ENCODE measurements at regions of chr10 and their contacts with region 1.

Region 1: DNA sequence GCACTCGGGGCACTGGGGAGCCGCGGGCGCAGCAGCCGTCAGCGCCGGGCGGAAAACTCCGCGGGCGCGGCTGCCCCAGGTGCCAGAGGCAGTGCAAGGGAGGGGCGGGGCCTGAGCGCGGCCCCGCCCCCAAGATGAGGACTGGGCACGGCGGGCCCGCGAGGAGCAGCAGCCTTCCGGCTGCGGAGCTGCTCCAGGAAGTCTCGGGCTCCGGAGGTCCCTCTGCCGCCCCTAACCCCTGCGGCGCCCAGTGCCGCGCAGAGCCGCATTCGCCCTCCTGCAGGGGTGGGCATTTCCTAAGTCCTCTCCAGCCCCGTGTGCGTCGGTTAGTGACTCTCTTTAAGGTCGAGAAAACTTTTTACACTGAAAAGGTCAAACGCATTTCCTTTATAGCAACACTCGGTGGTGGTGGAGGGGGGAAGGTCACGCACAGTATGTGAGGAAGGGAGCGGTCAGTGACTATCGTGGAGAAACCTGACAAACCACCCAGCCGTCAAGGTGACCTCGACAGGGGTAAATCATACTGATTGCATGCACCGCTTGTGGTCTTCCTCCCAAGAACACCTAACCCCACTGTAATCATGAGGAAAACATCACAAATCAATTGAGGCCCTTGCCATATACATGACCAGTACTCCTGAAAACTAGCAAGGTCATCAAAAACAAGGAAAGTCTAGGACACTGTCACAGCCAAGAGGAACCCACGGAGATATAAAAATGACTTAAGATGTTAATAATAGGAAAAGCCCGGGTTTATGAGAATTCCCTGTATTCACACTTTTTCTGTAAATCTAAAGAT is at the start of gene ANXA11:
- DNase-seq: peak; percentile 76
- H3K4me3 Mint-ChIP-seq: peak within 1 kb of the TSS; percentile 94
- H3K27ac Mint-ChIP-seq: peak within 1 kb of the TSS; percentile 92
- H3K4me1 Mint-ChIP-seq: peaks cover 50% of the 10 kb centered on the region
- H3K27me3 Mint-ChIP-seq: peaks cover 5% of the 10 kb centered on the region
- total RNA-seq, gene ANXA11: 216 and 239 TPM in 2 replicates

Region 2: DNA sequence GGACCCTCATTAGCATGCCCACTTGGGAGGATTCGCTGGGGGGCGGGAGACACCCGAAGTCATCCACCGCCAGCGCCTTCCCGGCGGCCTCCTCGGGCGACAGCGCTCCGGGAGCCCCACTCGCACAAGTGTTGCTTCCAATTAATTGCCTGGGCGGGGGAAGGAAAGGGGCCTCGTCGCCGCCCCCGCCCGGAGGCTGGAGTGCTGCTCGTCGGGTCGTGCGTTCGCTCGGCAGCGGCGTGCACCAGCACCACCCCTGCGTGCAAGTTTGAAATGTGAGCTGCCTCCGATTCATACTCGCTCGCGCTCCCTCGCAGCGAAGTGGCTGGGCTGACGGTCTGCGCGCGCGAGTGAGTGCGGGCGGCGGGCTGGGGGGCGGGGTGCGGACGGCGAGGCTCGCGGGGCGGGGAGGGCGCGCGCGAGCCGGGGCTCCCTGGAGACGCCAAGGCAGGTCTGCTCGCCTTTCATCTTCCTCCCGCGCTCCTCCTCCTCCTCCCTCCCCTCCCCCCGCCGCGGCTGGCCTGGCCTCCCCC is 963.0 kb before region 1 on chr10:
- intact Hi-C with region 1: loop called (anchors 10 kb)
- DNase-seq: peak; percentile 65
- H3K4me3 Mint-ChIP-seq: peak overlapping the region; percentile 81
- H3K27ac Mint-ChIP-seq: peak overlapping the region; percentile 83
- H3K4me1 Mint-ChIP-seq: peaks cover 71% of the 10 kb centered on the region
- H3K27me3 Mint-ChIP-seq: no peaks in the 10 kb centered on the region

Region 3: DNA sequence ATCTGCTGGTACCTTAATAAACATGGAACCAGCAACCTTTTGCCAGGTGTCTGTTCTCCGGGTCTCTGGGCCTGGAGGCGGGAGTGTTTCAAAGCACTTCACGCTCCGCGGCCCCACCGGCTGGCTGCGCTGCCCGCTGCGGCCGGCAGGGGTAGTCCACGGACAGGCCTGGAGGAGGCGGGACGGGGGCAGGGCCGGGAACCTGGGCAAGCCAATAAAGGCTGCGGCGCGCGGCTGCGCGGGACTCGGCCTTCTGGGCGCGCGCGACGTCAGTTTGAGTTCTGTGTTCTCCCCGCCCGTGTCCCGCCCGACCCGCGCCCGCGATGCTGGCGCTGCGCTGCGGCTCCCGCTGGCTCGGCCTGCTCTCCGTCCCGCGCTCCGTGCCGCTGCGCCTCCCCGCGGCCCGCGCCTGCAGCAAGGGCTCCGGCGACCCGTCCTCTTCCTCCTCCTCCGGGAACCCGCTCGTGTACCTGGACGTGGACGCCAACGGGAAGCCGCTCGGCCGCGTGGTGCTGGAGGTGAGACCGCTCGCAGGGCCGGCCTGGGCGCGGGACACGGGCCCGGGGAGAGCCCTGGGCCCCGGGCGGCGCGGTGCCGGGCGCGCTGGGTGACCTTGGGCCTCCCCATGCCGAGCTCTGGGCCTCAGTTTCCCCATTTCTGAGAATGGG is 858.3 kb before region 1 on chr10 and contains the start of gene PPIF:
- intact Hi-C with region 1: loop called (anchors 1 kb)
- DNase-seq: peak; percentile 95
- H3K4me3 Mint-ChIP-seq: peak within 1 kb of the TSS; percentile 95
- H3K27ac Mint-ChIP-seq: peak within 1 kb of the TSS; percentile 93
- H3K4me1 Mint-ChIP-seq: peaks cover 69% of the 10 kb centered on the region
- H3K27me3 Mint-ChIP-seq: no peaks in the 10 kb centered on the region
- total RNA-seq, gene PPIF: 155 and 157 TPM in 2 replicates

Region 4: DNA sequence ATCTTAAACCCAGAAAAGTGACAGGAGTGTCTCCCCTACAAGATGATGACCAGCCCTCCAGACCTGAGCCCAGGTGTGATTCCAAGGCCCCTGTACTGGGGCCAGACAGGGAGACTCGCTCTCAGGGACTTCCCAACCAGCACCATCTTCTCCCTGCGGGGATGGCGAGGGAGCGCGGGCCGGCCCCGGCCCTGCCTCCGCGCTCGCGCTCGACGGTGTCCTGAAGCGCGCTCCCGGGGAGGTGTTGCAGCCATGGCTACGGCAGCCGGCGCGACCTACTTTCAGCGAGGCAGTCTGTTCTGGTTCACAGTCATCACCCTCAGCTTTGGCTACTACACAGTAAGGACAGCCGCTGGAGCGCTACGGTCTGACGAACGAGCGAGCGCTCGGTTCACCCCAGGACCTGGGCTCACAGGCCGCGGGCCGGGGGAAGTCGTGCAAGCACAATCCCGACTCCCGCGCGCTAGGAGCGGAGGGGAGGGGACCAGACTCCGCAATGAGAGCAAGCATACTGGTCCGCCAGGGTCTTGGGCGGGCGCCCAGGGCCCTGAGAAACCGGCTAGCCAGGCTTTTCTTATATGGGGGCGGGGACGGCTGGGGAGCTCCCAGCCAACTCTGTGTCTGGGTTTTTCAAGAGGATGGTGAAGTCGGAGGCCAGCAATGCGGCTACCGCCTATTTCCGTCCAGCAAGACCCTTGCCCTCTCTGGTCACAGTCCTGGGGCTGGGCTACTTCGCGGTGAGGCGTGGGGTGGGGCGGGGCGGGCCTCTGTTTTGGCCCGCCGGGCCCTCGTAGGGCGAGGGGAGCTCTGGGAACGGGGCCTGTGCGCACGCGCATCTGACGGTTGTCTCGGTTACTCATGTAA is 127.0 kb before region 1 on chr10 and contains the start of gene TMEM254:
- intact Hi-C with region 1: loop called (anchors 1 kb)
- DNase-seq: peak; percentile 85
- H3K4me3 Mint-ChIP-seq: peak within 1 kb of the TSS; percentile 98
- H3K27ac Mint-ChIP-seq: peak within 1 kb of the TSS; percentile 92
- H3K4me1 Mint-ChIP-seq: peaks cover 29% of the 10 kb centered on the region
- H3K27me3 Mint-ChIP-seq: no peaks in the 10 kb centered on the region
- total RNA-seq, gene TMEM254: 10.8 and 12.4 TPM in 2 replicates

Region 5: GRCh38 chr10:80187465-80188409 is 17.9 kb before region 1 on chr10:
- intact Hi-C with region 1: loop called (anchors 1 kb)
- DNase-seq: peak; percentile 75
- H3K4me3 Mint-ChIP-seq: peak overlapping the region; percentile 68
- H3K27ac Mint-ChIP-seq: peak overlapping the region; percentile 94
- H3K4me1 Mint-ChIP-seq: peaks cover 78% of the 10 kb centered on the region
- H3K27me3 Mint-ChIP-seq: no peaks in the 10 kb centered on the region

Region 6: DNA sequence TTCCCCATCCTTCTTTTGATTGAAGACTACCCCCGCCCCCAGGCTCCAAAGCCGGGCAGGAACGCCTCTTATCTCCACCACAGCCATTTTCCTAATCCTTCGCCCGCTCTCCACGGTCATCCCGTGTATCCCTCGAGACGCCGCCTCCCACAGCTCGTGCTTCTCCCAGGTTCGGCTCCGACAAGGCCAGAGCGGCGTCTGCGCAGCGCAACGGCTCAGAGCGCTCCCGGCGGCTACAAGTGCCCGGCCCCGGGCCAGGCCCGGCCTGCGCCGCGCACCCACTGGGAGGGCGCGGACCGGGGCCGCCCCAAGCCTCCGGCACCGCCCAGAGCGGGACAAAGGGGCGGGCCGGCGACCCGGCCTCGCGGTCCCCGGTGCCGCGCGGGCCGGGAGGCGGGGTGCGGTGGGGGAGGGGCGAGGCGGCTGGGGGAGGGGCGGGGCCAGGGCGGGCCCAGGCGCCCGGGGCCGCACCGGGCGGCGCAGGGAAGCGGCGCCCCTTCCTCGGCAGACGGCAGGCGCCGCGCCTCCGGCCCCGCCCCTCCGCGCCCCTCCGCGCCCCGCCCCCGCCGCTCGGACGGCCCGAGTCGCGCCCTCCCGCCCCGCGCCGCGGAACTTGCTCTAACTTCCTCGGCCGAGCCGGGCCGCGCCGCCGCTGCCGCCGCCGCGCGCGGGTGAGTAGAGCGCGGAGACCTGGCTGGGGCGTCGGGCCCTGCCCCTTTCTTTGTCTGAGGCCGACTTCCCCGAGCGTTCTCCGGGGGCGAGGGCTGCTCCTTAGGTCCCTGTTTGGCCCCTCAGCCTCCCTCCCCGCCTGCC is 248.2 kb after region 1 on chr10 and contains the start of gene TSPAN14:
- intact Hi-C with region 1: loop called (anchors 10 kb)
- DNase-seq: peak; percentile 73
- H3K4me3 Mint-ChIP-seq: peak within 1 kb of the TSS; percentile 98
- H3K27ac Mint-ChIP-seq: peak within 1 kb of the TSS; percentile 88
- H3K4me1 Mint-ChIP-seq: peaks cover 49% of the 10 kb centered on the region
- H3K27me3 Mint-ChIP-seq: no peaks in the 10 kb centered on the region
- total RNA-seq, gene TSPAN14: 75.4 and 81.9 TPM in 2 replicates

Region 7: DNA sequence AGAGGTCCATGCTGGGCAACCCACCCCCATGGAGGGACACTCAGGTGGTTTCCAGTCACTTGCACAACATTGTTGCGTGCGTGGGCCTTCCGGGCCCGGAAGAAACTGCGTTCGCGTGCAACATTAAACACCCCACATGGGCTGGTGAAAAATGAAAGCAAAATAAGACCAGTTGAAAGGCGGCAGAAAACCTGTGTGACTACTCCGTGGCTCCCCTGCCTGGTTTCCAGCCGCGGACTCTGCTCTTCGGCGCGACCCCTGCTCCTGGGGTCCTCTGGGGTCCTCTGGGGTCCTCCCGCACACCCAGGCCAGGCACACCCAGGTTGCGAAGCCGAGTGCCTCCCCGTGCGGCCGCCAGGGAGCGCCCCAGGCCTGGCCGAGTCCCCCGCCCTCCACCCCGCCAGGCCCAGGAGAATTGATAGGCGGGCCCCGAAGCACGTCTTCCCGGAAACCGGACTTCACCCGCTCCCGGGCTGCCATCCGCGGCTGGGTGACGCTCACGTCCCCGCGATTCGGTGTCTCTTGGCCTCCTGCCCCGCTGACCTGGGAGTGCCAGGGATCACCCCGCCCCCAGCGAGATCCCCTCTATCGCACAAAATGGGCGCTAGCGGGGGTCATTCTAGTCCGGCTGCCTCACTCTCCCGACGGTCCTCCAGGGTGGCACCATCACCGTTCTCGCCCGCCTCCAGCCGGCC is 330.1 kb after region 1 on chr10:
- intact Hi-C with region 1: loop called (anchors 10 kb)
- DNase-seq: peak; percentile 71
- H3K4me3 Mint-ChIP-seq: peak overlapping the region; percentile 95
- H3K27ac Mint-ChIP-seq: peak overlapping the region; percentile 100
- H3K4me1 Mint-ChIP-seq: peaks cover 49% of the 10 kb centered on the region
- H3K27me3 Mint-ChIP-seq: no peaks in the 10 kb centered on the region